ENCODE measurements at regions of chr6 and their contacts with region 1.

Region 1: GRCh38 chr6:75284632-75285286 is at the start of gene TMEM30A:
- DNase-seq: peak; percentile 96
- ATAC-seq: peak; percentile 87
- H3K4me3 ChIP-seq: peak within 1 kb of the TSS; percentile 84
- H3K27ac ChIP-seq: peak within 1 kb of the TSS; percentile 82
- H3K4me1 ChIP-seq: peaks cover 24% of the 10 kb centered on the region
- H3K27me3 ChIP-seq: no peaks in the 10 kb centered on the region
- CTCF ChIP-seq: no peak
- total RNA-seq, gene TMEM30A: 35.7 and 36.8 TPM in 2 replicates

Region 2: DNA sequence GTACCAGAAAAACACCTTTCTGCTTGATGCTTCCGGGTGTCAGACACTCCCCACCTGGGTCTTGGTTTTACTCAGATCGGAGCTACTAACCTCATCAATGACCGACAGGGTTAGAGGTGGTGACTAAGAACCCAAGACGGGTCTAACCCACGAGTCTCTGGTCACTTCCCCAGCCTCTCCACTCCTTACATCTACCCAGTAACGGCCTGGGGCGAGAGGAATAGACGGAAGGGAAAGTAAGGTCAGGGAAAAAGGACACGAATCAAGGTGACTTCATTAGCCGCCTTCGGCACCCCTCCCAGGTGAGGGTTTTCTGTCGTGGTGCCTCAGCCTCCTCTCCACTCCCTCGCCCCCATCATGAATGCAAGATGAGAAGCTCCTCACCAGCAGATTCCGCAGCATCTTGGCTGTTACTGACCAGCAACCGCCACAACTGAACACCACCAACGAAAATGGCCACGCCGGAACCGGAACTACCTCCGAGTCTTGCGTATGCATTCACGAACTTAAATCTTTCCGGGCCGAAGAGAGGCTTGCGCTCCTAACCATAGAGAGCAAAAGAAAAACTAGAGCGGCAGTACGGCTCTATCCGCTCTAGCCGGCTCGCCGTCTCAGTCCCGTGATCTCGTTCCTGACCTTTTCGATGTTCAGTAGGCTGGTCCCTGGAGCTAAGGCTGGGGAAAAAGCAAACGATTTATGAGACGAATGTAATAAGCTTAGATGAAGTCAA is 41.3 kb before region 1 on chr6 and contains the start of gene COX7A2:
- CTCF ChIA-PET with region 1: no interaction called
- POLR2A ChIA-PET with region 1: interaction called, 4 read pairs
- intact Hi-C with region 1: loop called (anchors 5 kb)
- DNase-seq: peak; percentile 94
- ATAC-seq: peak; percentile 95
- H3K4me3 ChIP-seq: peak within 1 kb of the TSS; percentile 95
- H3K27ac ChIP-seq: peak within 1 kb of the TSS; percentile 89
- H3K4me1 ChIP-seq: peaks cover 8% of the 10 kb centered on the region; the same call in 1 of the 2 replicates
- H3K27me3 ChIP-seq: no peaks in the 10 kb centered on the region
- CTCF ChIP-seq: no peak
- total RNA-seq, gene COX7A2: 160 and 172 TPM in 2 replicates

Measured in PC-3 (cell line).